ENCODE measurements at regions of chr20 and their contacts with region 1.

Region 1: DNA sequence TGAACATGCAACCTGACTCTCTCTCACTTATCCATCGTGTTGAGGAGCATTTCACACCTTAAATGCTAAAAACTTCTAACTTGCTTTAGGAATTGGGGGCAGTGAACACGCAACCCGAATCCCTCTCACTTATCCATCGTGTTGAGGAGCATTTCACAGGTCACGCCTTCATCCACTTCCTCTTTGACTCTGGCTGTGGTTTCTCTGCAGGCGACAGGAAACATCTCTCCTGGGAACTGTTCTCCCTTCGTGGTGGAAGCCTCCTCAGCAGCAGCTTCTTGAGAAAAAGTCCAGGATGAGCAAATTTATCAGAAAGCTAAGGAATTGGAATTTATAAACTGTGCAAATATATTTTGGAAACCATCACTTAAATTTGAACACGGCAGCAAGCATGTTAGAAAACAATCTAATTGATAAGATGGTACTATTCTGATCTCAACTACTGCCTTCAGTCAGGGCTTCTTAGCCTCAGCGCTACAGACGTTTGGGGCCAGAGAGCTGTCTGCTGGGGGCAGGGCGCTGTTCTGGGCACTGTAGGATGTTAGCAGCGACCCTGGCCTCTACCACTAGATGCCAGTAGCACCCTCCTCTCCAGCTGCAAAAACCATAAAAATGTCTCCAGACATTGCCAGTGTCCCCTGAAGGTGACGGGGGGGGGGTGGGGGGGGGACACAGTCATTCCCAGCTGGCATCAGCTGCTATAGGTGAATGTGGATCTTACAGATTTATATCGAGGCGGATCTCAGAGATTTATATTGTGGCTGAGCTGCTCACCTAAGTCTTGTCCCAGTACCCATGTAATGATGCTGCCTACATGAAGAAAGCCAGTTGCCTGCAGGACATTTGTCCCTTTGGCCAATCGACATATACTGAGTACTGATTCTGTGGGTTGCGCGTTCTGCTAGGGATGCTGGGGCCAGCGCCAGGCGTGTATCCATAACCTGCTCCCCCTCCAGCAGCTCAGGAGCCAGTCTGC is 26.2 kb downstream of the CTCFL start:
- DNase-seq: no peak
- ATAC-seq: peak; percentile 80
- H3K4me3 ChIP-seq: no peak overlapping the region
- H3K27ac ChIP-seq: no peak overlapping the region
- H3K4me1 ChIP-seq: no peaks in the 10 kb centered on the region; the same call in 1 of the 2 replicates
- H3K27me3 ChIP-seq: peaks cover 4 to 40% of the 10 kb centered on the region in 2 experiments; a peak in 4 of 5 replicates
- CTCF ChIP-seq: peak; percentile 63
- EP300 ChIP-seq: no peak
- POLR2A ChIP-seq: no peak
- RAD21 ChIP-seq: no peak

Region 2: DNA sequence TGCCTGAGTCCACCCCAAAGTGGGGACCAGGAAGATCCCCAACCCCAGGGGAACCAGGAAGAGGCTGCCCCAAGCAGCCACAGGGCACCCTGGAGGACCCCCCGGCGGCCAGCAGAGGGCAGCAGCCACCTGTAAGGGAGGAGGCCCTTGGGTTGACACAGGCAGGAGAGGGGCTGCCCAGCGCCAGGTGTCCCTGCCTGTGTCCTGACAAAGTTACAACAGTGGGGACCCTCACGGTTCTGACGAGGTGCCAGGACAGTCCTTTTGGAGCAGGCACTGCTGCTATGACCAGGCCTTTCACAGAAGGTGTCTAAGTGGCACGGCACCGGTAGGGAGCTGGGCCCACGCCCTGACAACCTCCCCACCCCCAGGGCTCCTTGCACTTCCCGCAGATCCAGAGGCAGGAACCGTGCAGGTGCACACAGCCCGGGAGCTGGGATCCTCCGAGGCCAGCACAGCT is 409.0 kb before region 1 on chr20:
- CTCF ChIA-PET with region 1: no interaction called
- POLR2A ChIA-PET with region 1: no interaction called
- in situ Hi-C with region 1: no loop called
- intact Hi-C with region 1: loop called (anchors 2 kb)
- DNase-seq: peak; percentile 63
- ATAC-seq: peak; percentile 94
- H3K4me3 ChIP-seq: no peak overlapping the region
- H3K27ac ChIP-seq: no peak overlapping the region
- H3K4me1 ChIP-seq: no peaks in the 10 kb centered on the region
- H3K27me3 ChIP-seq: peaks cover 2 to 41% of the 10 kb centered on the region in 2 experiments; a peak in 4 of 5 replicates
- CTCF ChIP-seq: peak; percentile 99
- EP300 ChIP-seq: no peak
- POLR2A ChIP-seq: no peak
- RAD21 ChIP-seq: peak; percentile 97

Region 3: GRCh38 chr20:57383447-57384347 is 115.0 kb before region 1 on chr20:
- CTCF ChIA-PET with region 1: interaction called, 127 read pairs
- POLR2A ChIA-PET with region 1: no interaction called
- in situ Hi-C with region 1: loop called (anchors 5 kb)
- intact Hi-C with region 1: loop called (anchors 1 kb)
- DNase-seq: no peak
- ATAC-seq: no peak
- H3K4me3 ChIP-seq: no peak overlapping the region
- H3K27ac ChIP-seq: no peak overlapping the region
- H3K4me1 ChIP-seq: 0 out of 2 replicates have a peak, but pooled peaks cover 2% of the 10 kb centered on the region
- H3K27me3 ChIP-seq: no peaks in the 10 kb centered on the region
- CTCF ChIP-seq: no peak
- EP300 ChIP-seq: no peak
- POLR2A ChIP-seq: no peak
- RAD21 ChIP-seq: no peak

Region 4: DNA sequence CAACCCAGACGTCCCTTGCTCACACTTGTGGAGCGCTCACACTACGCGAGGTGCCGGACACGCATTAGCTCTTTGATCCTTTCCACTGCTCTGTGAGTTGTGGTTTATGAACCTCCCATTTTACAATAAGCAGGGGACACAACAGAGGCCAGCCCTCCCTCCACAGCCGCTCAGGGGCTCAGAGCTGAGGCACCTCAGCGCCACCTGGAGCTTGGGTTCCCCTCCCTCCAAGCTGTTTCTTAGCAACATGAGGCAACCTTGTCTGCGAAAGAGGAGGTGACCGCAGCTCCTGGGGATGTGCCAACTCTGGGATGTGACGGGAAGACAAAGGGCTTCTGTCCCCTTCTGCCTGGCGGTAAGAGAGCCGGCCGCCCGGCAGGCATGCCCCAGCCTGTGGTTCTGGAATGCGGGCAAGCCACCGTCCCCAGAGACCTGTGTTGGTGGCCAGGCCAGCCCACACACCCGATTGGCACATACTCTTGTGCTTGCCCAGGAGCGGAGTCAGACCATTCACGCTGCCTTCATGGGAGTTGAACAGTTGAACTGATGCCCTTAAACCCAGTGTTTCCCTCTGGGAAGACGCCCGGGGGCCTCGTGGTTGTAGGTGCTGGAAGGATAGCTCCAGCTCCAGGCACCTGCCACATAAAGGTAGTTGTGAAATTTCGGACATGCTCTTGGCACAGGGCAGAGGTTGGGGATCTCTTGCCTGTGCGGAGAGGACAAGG is 63.1 kb before region 1 on chr20:
- CTCF ChIA-PET with region 1: no interaction called
- POLR2A ChIA-PET with region 1: no interaction called
- in situ Hi-C with region 1: no loop called
- intact Hi-C with region 1: loop called (anchors 1 kb)
- DNase-seq: peak; percentile 99
- ATAC-seq: peak; percentile 91
- H3K4me3 ChIP-seq: peak overlapping the region in 1 of 3 experiments; percentile 14; a peak in 1 of 6 replicates
- H3K27ac ChIP-seq: no peak overlapping the region
- H3K4me1 ChIP-seq: peaks cover 48% of the 10 kb centered on the region
- H3K27me3 ChIP-seq: peaks cover 2 to 38% of the 10 kb centered on the region in 2 experiments
- CTCF ChIP-seq: peak; percentile 79
- EP300 ChIP-seq: peak; percentile 55 to 65; a peak in 2 of 4 replicates
- POLR2A ChIP-seq: peak in 1 of 2 experiments; percentile 19; a peak in 1 of 4 replicates
- RAD21 ChIP-seq: 0 out of 2 replicates have a peak, but pooled peaks have one; percentile 14

Region 5: DNA sequence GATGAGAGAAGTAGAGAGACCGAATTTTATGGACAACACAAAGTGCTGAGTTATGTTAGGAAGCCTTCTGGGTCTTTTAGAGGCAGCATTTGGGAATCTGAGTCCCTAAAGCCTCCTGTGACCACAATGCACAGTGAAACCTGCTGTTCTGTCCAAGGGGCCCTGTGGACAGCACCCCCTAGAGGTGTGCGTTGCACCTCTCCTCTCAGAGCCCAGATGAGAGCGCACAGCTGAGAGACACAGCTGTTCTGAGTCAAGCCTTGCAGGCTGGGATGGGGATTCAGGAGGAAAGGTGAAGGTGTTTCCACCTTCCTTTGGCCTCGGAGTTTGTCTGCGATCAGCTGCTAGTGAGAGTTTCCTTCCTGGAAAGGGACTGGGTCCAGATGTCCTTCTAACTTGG is 75.2 kb after region 1 on chr20:
- CTCF ChIA-PET with region 1: no interaction called
- POLR2A ChIA-PET with region 1: no interaction called
- in situ Hi-C with region 1: no loop called
- intact Hi-C with region 1: no loop called
- DNase-seq: no peak
- ATAC-seq: peak; percentile 41
- H3K4me3 ChIP-seq: no peak overlapping the region
- H3K27ac ChIP-seq: no peak overlapping the region
- H3K4me1 ChIP-seq: peaks cover 62% of the 10 kb centered on the region
- H3K27me3 ChIP-seq: peaks cover 1 to 10% of the 10 kb centered on the region in 2 experiments; a peak in 3 of 5 replicates
- CTCF ChIP-seq: peak; percentile 71
- EP300 ChIP-seq: no peak
- POLR2A ChIP-seq: no peak
- RAD21 ChIP-seq: no peak

Region 6: DNA sequence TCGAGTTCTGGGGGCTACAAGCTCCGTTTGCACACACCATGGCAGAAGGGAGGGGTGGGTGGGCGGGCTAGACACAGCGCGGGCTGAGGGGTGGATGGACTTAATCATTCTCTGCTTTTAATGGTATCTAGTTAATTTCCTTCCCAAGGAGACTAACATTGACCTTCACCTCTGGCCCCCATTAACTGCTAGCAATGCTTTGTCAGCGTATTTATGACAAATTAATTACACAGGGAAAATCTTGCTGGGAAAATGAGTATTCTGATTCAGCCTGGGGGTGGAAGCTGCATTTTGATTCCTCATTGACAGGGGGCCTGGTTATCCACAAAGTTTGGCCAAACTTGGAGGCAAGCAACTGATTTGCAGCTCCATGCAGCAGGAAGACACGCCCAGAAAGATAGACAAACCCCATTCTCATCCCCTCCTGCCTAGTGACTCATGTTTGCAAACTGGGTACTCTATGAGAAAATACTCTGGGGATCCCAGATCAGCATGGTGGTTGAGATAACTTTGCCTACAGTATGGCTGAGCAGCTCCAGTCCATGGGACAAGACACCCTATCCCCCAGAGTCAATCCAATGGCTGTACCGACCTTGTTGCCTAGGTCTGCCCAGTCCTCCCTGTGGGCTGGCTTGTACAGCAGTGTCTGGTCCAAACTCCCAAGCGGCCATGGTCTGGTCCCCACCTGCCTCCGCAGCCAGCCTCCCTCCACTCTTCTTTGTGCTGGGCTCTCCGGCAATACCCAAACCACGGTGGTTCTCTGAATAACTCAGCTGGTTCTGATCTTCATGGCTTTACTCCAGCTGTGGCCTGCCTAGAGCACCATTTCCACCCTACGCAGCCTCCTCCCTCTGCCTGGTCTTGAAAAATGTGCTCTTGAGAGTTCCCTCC is 101.9 kb after region 1 on chr20:
- CTCF ChIA-PET with region 1: no interaction called
- POLR2A ChIA-PET with region 1: no interaction called
- in situ Hi-C with region 1: no loop called
- intact Hi-C with region 1: no loop called
- DNase-seq: no peak
- ATAC-seq: no peak
- H3K4me3 ChIP-seq: no peak overlapping the region
- H3K27ac ChIP-seq: no peak overlapping the region
- H3K4me1 ChIP-seq: no peaks in the 10 kb centered on the region
- H3K27me3 ChIP-seq: peaks cover 2 to 57% of the 10 kb centered on the region in 2 experiments; a peak in 3 of 5 replicates
- CTCF ChIP-seq: no peak
- EP300 ChIP-seq: no peak
- POLR2A ChIP-seq: no peak
- RAD21 ChIP-seq: no peak

Measured in HepG2 (cell line).